PC-3 (cell line): ENCODE measurements at regions of chr12 and their contacts with region 1.

Region 1: DNA sequence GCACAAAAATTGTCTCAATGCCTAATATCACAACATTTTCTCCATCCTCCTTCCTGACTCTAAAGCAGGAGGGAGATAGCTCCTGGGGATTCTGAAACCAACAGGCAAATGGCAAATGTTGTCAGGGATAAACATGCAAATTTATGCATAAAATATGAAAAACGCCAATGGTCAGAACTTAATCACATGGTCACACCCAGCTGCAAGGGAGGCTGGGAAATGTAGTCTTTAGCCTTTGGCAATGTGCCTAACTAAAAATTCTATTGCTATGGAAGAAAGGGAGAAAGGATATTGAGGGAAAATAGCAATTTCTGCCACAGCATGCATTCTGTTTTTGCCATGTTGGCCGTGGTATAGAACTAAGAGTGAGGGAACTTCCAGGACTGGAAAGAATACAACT is 11.7 kb upstream of the OASL start:
- DNase-seq: peak; percentile 48
- ATAC-seq: no peak
- H3K4me3 ChIP-seq: no peak overlapping the region
- H3K27ac ChIP-seq: no peak overlapping the region
- H3K4me1 ChIP-seq: no peaks in the 10 kb centered on the region
- H3K27me3 ChIP-seq: no peaks in the 10 kb centered on the region
- CTCF ChIP-seq: no peak

Region 2: GRCh38 chr12:121080909-121081308 is 30.2 kb after region 1 on chr12:
- CTCF ChIA-PET with region 1: no interaction called
- POLR2A ChIA-PET with region 1: interaction called, 14 read pairs
- intact Hi-C with region 1: no loop called
- DNase-seq: no peak
- ATAC-seq: no peak
- H3K4me3 ChIP-seq: no peak overlapping the region
- H3K27ac ChIP-seq: no peak overlapping the region
- H3K4me1 ChIP-seq: no peaks in the 10 kb centered on the region
- H3K27me3 ChIP-seq: no peaks in the 10 kb centered on the region
- CTCF ChIP-seq: no peak